Calu3 (cell line): ENCODE measurements at regions of chr11 and their contacts with region 1.

Region 1: DNA sequence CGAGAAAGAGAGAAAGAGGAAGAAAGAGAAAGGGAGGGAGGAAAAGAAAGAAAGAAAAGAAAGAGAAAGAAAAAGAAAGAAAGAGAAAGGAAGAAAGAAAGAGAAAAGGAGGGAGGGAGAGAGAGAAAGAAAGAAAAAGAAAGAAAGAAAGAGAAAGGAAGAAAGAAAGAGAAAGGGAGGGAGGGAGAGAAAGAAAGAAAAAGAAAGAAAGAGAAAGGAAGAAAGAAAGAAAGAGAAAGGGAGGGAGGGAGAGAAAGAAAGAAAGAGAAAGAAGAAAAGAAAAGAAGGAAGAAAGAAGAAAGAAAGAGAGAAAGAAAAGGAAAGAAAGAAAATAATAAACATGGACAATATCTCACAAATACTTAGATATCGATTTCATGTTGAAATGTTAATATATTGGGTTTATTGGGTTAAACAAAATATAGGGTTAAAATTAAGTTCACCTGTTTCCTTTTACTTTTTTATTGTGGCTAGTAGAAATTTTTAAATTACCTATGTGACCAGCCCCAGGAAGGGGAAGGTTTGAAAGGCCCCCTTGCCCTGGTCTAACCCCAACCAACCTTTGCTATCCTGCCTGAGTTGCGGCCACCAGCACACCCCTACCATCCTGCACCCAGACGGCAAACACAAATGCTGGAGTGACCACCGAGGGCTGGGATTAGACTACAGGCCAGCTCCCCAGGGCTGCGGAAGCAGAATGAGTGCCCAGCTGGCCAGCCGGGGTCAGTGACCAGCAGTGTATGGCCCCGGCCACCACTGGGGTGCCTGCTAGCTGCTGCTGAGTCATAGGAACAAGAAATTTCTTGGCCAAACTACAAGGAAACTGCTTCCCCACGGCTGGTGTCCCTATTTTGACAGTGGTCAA is 81.0 kb upstream of the FGF3 start:
- DNase-seq: peak; percentile 85
- H3K4me3 Mint-ChIP-seq: peak overlapping the region; percentile 29
- H3K27ac Mint-ChIP-seq: peak overlapping the region; percentile 77
- H3K4me1 Mint-ChIP-seq: peaks cover 42% of the 10 kb centered on the region
- H3K27me3 Mint-ChIP-seq: no peaks in the 10 kb centered on the region
- CTCF ChIP-seq: no peak

Region 2: DNA sequence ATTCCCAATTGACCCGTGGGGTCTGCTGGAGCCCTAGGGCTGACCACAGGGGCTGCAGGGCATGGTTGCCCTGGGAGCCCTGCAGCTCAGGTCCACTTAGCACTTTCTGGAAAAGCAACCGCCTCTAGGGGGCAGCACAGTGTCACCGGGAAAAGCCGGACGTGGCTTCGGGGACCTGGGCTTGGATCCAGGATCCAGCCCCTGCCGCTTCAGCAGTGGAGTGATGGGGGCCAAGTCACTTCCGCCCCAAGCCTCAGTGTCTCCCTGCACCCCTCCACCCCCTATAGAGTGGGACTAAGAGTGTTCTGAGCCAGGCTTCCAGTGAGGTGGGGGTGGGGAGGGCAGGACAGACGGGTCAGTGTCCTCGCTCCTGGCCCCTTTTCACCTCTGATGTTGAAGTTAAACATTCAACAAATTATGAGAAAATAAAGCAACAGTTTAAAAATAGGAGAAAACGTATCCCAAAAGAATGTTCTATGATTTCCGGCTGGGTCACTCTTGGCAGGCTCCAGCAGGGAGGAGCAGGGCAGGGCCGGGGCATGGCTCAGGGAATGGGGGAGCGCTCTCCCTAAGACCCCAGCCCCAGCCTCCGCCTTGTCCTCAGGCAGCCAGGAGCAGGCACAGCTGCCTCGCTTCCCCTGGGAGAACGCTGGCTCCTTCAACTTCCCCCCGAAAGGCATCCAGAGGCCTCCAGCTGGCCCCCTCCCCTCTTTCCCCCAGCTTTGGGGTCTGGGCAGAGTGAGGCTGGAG is 15.5 kb after region 1 on chr11:
- CTCF ChIA-PET with region 1: interaction called, 17 read pairs
- intact Hi-C with region 1: no loop called
- DNase-seq: peak; percentile 92
- H3K4me3 Mint-ChIP-seq: peak overlapping the region; percentile 1
- H3K27ac Mint-ChIP-seq: peak overlapping the region; percentile 28
- H3K4me1 Mint-ChIP-seq: peaks cover 59% of the 10 kb centered on the region
- H3K27me3 Mint-ChIP-seq: peaks cover 18% of the 10 kb centered on the region
- CTCF ChIP-seq: peak; percentile 91